Gastrocnemius medialis (tissue), 4 donors: ENCODE measurements at regions of chr5 and their contacts with region 1.

Region 1: DNA sequence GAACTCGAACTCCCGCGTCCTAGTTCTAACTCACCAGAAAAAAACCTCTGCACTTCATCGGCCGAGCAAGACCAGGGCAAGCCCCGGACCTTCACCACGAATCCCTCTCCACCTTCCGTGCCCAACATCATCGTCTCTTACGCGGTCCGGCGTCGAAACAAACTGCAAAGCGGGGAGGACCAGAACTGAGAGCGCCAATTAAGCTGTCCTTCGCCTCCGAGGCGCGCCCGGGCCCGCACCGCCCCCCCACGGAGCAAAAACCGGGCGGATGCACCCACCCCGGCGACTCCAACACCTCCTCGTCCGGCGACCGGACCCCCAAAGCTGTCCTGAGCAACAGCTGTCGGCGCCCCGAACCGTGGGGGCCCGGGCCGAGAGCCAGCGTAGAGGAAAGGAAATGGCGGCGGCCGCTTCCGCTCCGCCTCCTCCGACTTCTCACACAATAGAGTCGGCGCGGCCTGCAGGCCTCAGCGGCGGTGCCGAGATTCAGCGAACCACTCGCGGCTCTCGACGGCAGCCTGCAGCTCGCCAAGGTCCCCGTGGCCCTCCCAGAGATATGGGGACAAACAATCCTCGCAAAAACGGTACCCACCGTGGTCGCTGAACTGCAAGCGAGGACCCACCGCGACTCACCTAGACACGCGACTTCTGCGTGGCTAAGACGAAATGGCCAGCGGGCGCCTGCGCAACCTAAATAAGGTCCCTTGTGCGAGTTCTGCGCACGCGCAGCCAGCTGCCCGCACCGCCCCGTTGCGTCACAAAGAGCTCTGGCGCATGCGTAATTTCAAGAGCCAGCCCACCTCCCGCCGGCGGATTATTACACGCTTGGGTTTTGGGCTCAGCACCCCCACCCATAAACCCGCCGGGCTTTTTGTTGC is at the start of gene HNRNPH1:
- DNase-seq: peak; percentile 97 to 99
- ATAC-seq: peak; percentile 87 to 89
- H3K4me3 ChIP-seq: peak within 1 kb of the TSS; percentile 85 to 100 (median 96)
- H3K27ac ChIP-seq: peak within 1 kb of the TSS; percentile 96 to 100 (median 100)
- H3K4me1 ChIP-seq: peaks cover 47 to 50% of the 10 kb centered on the region in 2 donors
- H3K27me3 ChIP-seq: no peaks in the 10 kb centered on the region
- CTCF ChIP-seq: peak in 3 of 5 experiments; percentile 16 to 27 (median 16)
- POLR2A ChIP-seq: peak; percentile 100
- total RNA-seq, gene HNRNPH1: 72.4 to 209 (median 157) TPM

Region 2: DNA sequence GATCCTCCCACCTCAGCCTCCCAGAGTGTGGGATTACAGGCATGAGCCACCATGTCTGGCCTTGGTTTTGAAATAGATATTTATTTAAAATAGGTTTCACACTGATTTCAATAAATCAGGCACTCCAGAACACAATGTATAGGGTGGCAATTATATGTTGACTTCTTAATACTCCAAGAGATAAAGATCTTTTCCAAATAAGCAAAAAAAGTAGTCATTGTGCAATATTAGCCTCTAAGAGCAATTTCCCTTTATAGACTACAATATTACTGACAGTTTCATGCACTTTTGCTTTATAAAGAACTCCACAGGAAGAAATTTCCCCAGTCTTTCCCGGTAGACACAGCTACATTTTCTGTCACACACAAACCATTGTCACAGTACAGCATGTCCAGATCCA is 96.3 kb before region 1 on chr5:
- in situ Hi-C with region 1: no loop called
- intact Hi-C with region 1: no loop called
- DNase-seq: no peak
- ATAC-seq: no peak
- H3K4me3 ChIP-seq: no peak overlapping the region
- H3K27ac ChIP-seq: no peak overlapping the region
- H3K4me1 ChIP-seq: no peaks in the 10 kb centered on the region
- H3K27me3 ChIP-seq: peaks cover 11 to 19% (median 15%) of the 10 kb centered on the region in 3 donors
- CTCF ChIP-seq: no peak
- POLR2A ChIP-seq: no peak

Region 3: DNA sequence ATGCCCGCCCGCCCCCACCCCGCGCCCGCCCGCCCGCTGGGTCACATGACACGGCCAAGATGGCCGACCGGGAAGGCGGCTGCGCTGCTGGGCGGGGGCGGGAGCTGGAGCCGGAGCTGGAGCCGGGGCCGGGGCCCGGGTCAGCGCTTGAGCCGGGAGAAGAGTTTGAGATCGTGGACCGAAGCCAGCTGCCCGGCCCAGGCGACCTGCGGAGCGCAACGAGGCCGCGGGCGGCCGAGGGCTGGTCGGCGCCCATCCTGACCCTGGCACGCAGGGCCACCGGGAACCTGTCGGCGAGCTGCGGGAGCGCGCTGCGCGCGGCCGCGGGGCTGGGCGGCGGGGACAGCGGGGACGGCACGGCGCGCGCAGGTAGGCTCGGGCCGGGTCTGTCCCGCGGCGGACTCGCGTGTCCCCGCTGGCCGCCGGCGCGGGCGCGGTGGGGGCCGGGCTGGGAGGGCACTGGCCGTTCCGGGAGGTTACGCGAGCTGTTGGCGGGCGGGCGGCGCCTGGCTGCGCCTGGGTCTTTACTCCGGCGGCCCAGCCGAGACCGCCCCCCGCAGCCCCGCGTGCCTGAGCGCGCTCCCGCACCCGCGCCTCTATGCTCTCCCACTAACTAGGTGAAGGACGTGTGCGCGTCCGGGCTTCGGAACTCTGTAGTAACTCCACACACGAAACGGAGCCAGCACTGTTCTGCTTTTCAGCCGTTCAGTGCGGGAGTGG is 72.6 kb before region 1 on chr5 and contains the start of gene RUFY1:
- in situ Hi-C with region 1: no loop called
- intact Hi-C with region 1: loop called (anchors 1 kb)
- DNase-seq: peak; percentile 72 to 82
- ATAC-seq: peak; percentile 92
- H3K4me3 ChIP-seq: peak within 1 kb of the TSS; percentile 77 to 87 (median 80)
- H3K27ac ChIP-seq: peak within 1 kb of the TSS; percentile 87 to 97 (median 94)
- H3K4me1 ChIP-seq: peaks cover 22 to 31% of the 10 kb centered on the region in 2 donors
- H3K27me3 ChIP-seq: no peaks in the 10 kb centered on the region
- CTCF ChIP-seq: peak in 3 of 5 experiments; percentile 23 to 48 (median 42)
- POLR2A ChIP-seq: peak; percentile 87 to 94
- total RNA-seq, gene RUFY1: 19.6 to 36.3 (median 26.0) TPM

Region 4: DNA sequence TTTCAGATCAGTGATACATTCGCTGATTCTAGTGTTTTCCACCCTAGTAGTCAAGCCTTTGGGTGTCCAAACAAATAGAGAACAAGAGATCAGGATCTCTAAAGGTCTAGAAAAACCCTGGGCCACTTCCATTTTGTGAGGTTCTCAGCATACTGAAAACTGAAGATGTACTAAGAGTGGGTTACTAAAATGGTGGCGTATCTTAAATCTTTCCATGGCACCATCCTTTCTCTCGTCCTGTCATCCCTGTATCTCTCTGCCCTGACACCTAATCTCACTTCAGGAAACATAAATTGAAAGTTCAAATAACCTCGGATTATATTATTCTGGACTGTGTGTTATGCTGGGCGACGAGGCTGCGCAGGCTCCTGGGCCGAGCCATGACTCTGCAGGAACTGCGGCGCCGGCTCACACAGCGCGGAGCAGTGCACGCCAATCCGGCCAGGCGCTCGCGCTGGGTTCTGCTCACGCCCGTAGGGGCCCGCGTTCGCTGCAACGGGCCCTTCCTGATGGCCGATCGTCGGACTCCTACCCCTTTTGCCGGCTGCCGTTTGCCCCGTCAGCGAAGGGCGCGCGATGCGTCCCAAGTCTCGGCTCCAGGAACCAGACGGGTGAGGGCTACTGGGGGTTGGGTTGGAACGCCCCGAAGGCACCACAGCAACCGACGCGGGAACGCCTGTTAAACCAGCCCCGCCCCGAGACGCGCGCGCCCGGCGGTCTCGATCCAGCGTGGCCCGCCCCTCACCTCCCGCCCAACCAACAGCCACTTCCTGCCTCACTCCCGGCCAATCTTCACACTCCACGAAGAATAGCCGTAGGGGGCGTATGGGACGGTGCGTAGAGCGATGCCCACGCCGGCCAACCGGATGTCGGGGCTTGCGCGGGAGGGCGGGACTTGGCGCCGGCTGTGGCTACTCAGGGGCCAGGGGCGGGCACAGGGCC is 75.0 kb after region 1 on chr5:
- in situ Hi-C with region 1: no loop called
- intact Hi-C with region 1: loop called (anchors 1 kb)
- DNase-seq: peak; percentile 99 to 100
- ATAC-seq: peak; percentile 90 to 96
- H3K4me3 ChIP-seq: peak overlapping the region; percentile 83 to 99 (median 88)
- H3K27ac ChIP-seq: peak overlapping the region; percentile 93 to 100 (median 98)
- H3K4me1 ChIP-seq: peaks cover 21 to 28% of the 10 kb centered on the region in 2 donors
- H3K27me3 ChIP-seq: no peaks in the 10 kb centered on the region
- CTCF ChIP-seq: no peak
- POLR2A ChIP-seq: peak; percentile 90 to 91

Region 5: DNA sequence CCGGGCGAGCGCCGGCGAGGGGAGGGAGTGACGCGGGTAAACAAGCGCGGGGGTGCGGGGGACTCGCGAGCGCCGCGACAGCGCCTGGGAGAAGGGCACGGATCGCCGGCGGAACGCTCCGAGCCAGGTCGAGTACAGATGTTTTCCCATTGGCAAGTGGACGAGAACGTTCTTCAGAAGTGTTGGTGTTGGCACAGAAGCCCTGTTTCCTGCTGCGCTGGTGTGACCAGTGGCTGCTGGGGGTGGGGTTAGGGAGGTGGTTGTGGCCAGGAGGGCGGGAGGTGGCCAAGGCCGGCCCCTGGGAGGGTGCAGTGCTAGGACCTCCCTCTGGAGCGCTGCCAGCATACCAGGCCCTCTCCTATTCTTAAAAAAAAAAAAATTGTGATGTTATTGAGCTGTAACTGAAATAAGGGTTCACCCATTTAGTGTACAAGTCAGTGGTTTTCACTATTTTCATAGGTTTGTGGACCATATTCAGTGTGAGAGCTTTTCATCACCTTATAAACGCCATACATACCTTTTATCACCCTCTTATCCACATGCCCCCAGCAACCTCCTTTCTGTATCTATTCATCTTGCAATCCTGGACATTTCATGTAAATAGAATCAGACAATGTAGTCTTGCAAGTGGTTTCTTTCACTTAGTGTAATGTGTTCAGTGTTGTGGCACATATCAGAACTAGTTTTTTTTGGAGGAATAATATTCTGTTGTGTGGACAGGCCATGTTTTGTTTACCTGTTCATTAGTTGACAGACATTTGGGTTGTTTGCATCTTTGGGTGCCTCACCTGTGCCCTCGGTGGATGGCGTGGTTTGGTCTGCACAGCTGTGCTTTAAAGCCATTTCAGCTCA is 198.6 kb after region 1 on chr5:
- in situ Hi-C with region 1: no loop called
- intact Hi-C with region 1: loop called (anchors 1 kb)
- DNase-seq: peak; percentile 97 to 98
- ATAC-seq: peak; percentile 50 to 51
- H3K4me3 ChIP-seq: peak overlapping the region; percentile 89 to 97 (median 94)
- H3K27ac ChIP-seq: peak overlapping the region; percentile 95 to 100 (median 99)
- H3K4me1 ChIP-seq: peaks cover 65 to 66% of the 10 kb centered on the region in 2 donors
- H3K27me3 ChIP-seq: no peaks in the 10 kb centered on the region
- CTCF ChIP-seq: no peak
- POLR2A ChIP-seq: peak; percentile 77 to 90